Activated naive CD4-positive, alpha-beta T cell treated with anti-CD3 and anti-CD28 coated beads, Interleukin-2, amount 10 ng/mL, durations not matched to agents 7 days and 5 days (primary cell): ENCODE measurements at regions of chr6 and their contacts with region 1.

Region 1: GRCh38 chr6:158660333-158660754 is 10.5 kb downstream of the SYTL3 start:
- DNase-seq: peak; percentile 68
- H3K4me3 Mint-ChIP-seq: no peak overlapping the region
- H3K27ac Mint-ChIP-seq: peak overlapping the region; percentile 52
- H3K4me1 Mint-ChIP-seq: peaks cover 67% of the 10 kb centered on the region
- H3K27me3 Mint-ChIP-seq: no peaks in the 10 kb centered on the region

Region 2: DNA sequence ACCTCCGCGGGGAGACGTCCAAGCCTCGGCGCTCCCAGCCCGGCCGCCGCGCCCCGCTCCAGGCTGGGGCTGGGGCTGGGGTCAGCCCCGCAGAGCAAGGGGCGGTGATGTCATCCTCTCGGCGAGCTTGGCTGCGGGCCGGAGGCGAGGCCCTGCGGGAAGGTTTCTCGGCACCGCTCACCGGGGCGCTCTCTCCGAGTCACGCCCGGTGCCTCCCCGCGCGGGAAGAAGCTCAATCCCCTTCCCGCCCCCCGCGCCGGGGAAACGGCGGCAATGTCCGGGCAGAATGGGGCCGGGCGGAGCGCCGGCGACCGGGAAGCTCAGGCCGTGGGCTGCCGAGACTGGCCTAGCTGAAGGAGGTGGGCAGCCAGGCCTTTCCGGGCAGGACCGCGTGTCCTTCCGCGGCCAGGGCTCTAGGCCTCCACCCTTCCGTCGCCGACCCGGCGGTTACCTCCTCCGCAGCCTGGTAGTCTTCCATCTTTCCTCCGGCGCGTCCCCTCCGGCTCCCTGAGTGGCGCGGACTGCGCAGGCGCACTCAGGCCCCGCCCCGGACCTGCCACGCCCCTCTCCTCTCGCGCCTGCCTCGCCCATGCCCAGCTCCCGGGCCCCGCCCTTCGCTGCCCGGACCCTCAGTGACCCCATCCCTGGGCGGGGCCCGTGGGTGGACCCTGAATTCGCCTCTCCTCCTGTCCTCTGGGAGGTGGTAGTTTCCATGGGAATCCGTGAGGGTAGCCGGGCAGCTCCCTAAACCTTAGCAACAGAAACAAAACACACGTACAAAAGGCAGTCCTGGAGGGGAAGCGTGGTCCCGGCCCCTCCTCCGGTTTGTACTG is 15.9 kb before region 1 on chr6 and contains the start of gene DYNLT1:
- CTCF ChIA-PET with region 1: interaction called, 33 read pairs
- DNase-seq: peak; percentile 90
- H3K4me3 Mint-ChIP-seq: peak within 1 kb of the TSS; percentile 98
- H3K27ac Mint-ChIP-seq: peak within 1 kb of the TSS; percentile 97
- H3K4me1 Mint-ChIP-seq: peaks cover 75% of the 10 kb centered on the region
- H3K27me3 Mint-ChIP-seq: peaks cover 4% of the 10 kb centered on the region

Region 3: DNA sequence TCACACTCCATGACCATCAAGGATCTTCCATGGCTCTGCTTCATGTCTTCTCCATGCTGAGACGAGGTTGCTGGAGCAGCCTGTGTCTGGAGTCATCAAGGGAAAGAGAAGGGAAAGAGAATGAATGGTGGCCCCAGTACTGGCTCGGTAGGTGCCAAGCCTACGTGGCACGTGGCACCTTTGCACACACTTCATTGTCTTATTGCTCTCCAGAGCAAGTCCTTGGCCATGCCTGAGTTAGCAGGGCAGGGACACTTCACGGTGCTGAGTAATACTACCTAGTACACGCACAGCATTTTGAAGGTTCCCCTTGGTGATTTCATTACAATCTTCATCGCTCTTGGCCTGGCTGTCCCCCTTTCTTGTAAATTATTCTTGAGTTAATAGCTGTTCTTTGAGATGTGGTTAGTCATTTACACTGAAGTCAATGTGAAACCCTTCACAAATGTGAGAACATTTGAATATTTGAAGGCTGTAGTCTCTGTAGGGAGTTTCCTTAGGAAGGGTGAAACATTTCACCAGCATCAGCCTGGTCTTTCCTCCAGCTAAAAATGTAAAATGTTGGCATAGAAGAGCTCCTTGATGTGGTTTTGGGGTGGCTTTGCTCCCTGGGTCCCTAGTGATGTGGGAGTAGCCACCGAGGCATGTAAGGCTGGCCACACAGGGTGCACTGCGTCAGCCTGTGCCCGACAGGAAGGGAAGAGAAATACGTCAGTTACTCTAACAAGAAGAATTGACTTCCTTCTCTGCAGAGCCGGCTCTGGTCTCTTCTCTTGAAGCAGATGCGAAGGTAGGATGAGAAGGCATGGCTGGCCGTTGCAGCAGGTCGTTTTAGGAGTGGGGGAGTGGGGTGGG is 10.8 kb before region 1 on chr6 and contains the start of gene SYTL3:
- CTCF ChIA-PET with region 1: interaction called, 33 read pairs
- DNase-seq: peak; percentile 84
- H3K4me3 Mint-ChIP-seq: peak within 1 kb of the TSS; percentile 78
- H3K27ac Mint-ChIP-seq: peak within 1 kb of the TSS; percentile 99
- H3K4me1 Mint-ChIP-seq: peaks cover 79% of the 10 kb centered on the region
- H3K27me3 Mint-ChIP-seq: peaks cover 5% of the 10 kb centered on the region